Activated CD4-positive, alpha-beta memory T cell treated with anti-CD3 and anti-CD28 coated beads for 36 hours (primary cell): ENCODE measurements at regions of chr3 and their contacts with region 1.

Region 1: GRCh38 chr3:105774444-105775180 is 94.2 kb downstream of the CBLB start:
- DNase-seq: no peak
- H3K4me3 Mint-ChIP-seq: no peak overlapping the region
- H3K27ac Mint-ChIP-seq: peak overlapping the region; percentile 49
- H3K4me1 Mint-ChIP-seq: peaks cover 71% of the 10 kb centered on the region
- H3K27me3 Mint-ChIP-seq: no peaks in the 10 kb centered on the region

Region 2: GRCh38 chr3:104642827-104643226 is 1131.8 kb before region 1 on chr3:
- CTCF ChIA-PET with region 1: no interaction called
- POLR2A ChIA-PET with region 1: no interaction called
- intact Hi-C with region 1: no loop called
- DNase-seq: no peak
- H3K4me3 Mint-ChIP-seq: no peak overlapping the region
- H3K27ac Mint-ChIP-seq: no peak overlapping the region
- H3K4me1 Mint-ChIP-seq: no peaks in the 10 kb centered on the region
- H3K27me3 Mint-ChIP-seq: no peaks in the 10 kb centered on the region

Region 3: GRCh38 chr3:105806361-105806760 is 31.7 kb after region 1 on chr3:
- CTCF ChIA-PET with region 1: no interaction called
- POLR2A ChIA-PET with region 1: interaction called, 3 read pairs
- intact Hi-C with region 1: loop called (anchors 2 kb)
- DNase-seq: no peak
- H3K4me3 Mint-ChIP-seq: no peak overlapping the region
- H3K27ac Mint-ChIP-seq: peak overlapping the region; percentile 45
- H3K4me1 Mint-ChIP-seq: peaks cover 61% of the 10 kb centered on the region
- H3K27me3 Mint-ChIP-seq: no peaks in the 10 kb centered on the region

Region 4: GRCh38 chr3:106119614-106120082 is 345.0 kb after region 1 on chr3:
- CTCF ChIA-PET with region 1: no interaction called
- POLR2A ChIA-PET with region 1: no interaction called
- intact Hi-C with region 1: no loop called
- DNase-seq: peak; percentile 42
- H3K4me3 Mint-ChIP-seq: no peak overlapping the region
- H3K27ac Mint-ChIP-seq: peak overlapping the region; percentile 50
- H3K4me1 Mint-ChIP-seq: peaks cover 21% of the 10 kb centered on the region
- H3K27me3 Mint-ChIP-seq: no peaks in the 10 kb centered on the region